ENCODE measurements at regions of chr7 and their contacts with region 1.

Region 1: DNA sequence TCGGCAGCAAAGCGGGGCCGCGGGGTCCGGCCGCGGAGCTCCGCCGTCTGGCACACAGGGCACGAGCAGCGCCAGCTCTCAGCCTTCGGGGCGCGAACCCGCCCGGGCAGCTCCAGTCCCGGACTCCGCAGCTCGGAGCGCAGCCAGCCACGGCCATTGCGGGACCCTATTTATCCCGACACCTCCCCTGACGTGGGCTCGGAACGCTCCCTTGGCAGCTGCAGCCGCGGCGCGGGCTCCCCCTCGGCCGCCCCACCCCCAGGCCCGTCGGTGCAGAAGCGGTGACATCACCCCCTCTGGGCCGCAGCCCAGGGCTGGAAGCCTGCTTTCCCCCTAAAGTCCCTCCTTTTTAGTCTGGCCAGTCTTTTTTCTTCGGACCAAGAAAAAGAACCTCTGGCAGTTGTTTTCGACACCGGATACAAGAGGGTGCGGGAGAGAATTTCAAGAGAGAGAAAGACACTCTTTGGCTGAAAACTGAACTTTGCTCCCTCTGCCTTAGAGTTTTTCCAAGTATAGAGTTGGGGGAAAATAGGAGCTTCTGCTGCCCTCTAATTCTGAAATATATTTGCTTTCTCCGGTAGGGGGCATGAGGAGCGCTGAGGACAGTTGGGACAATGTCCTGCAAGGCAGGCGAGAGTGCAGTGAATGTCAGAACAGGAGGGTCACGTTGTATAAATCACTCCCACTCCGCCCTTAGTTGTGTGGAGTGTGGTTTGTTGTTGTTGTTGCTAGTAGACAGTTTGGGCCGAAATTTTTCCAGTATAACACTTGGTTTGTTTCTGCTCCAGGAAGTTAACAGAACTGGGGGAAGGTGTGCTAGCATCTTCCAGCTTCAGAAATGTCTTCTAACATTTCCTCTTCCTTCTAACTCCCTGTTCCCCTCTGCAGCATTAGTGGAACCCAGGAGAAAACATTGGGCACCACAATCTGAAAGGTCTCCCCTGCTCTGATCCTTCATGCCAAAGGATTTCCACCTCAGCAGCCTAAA is at the start of gene SFRP4:
- DNase-seq: peak; percentile 80 to 84
- ATAC-seq: peak; percentile 31 to 61 (median 46)
- H3K4me3 ChIP-seq: peak within 1 kb of the TSS; percentile 64
- H3K27ac ChIP-seq: peak within 1 kb of the TSS; percentile 20
- H3K4me1 ChIP-seq: no peaks in the 10 kb centered on the region
- H3K27me3 ChIP-seq: peaks cover 0 to 5% (median 0%) of the 10 kb centered on the region in 3 donors
- CTCF ChIP-seq: peak; percentile 77
- total RNA-seq, gene SFRP4: 0.36 to 2.0 (median 1.1) TPM

Region 2: DNA sequence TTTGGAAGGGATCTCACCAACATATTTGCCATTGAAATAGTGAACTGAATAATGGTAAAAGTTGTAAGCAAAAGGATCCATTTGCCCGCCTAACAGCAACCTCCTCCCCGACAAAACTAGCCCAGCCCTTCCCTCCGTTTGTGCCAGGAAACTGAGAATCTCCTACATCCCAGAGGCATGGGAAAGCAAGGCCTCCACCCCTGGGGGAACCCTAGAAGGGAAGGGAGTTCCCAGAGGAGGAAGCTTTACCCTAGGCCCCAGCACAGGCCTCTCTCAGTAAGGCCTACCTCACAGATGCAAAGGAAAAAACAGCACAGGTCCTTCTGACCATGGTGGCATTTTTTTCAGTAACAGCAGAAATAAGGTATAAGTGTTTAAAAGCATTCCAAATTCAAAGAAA is 698.0 kb before region 1 on chr7:
- intact Hi-C with region 1: no loop called
- DNase-seq: no peak
- ATAC-seq: no peak
- H3K4me3 ChIP-seq: no peak overlapping the region
- H3K27ac ChIP-seq: no peak overlapping the region
- H3K4me1 ChIP-seq: no peaks in the 10 kb centered on the region
- H3K27me3 ChIP-seq: peaks cover 0 to 1% (median 0%) of the 10 kb centered on the region in 3 donors
- CTCF ChIP-seq: no peak

Region 3: DNA sequence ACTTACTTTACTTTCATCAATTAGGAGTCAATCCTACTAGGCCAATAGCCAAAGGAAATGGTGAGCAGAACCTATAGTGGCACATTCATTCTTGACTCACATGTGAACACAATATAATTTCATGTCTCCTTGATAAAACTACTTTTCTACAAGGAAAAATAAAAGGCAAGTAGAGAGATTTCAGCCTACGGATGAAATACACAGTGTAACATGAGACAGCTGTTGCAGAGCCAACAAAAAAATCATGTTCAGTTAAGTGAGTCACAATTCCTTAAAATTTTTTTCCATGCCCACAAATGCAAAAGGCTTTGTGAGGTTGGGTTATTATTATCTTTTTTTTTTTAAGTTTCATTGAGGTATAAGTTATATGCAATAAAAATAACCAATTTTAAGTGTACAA is 178.6 kb before region 1 on chr7:
- intact Hi-C with region 1: no loop called
- DNase-seq: no peak
- ATAC-seq: no peak
- H3K4me3 ChIP-seq: no peak overlapping the region
- H3K27ac ChIP-seq: no peak overlapping the region
- H3K4me1 ChIP-seq: no peaks in the 10 kb centered on the region
- H3K27me3 ChIP-seq: no peaks in the 10 kb centered on the region
- CTCF ChIP-seq: no peak

Region 4: DNA sequence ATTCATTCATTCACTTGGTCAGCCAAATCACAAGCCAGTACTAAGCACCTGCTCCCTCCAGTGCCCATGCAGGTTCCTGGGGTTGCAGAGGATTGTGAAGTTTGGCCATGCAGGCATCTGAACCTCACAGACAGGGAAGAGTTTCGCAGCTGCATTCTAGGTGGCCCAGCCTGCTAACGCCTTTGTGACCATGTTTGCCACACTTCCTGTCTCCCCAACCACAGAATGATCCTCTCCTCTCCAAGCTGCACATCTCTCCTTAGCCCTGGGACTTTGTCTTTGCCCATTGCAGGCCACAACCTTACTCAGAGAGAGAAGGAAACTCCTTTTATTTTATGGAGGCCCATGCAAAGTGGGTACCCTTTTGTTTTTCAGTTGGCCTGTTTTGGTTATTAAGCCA is 35.3 kb after region 1 on chr7:
- intact Hi-C with region 1: no loop called
- DNase-seq: no peak
- ATAC-seq: no peak
- H3K4me3 ChIP-seq: no peak overlapping the region
- H3K27ac ChIP-seq: no peak overlapping the region
- H3K4me1 ChIP-seq: peaks cover 3% of the 10 kb centered on the region
- H3K27me3 ChIP-seq: no peaks in the 10 kb centered on the region
- CTCF ChIP-seq: no peak

Region 5: GRCh38 chr7:38000272-38000671 is 83.3 kb after region 1 on chr7:
- intact Hi-C with region 1: loop called in 1 of 2 experiments (anchors 10 kb)
- DNase-seq: no peak
- ATAC-seq: peak; percentile 37 to 54 (median 46)
- H3K4me3 ChIP-seq: no peak overlapping the region
- H3K27ac ChIP-seq: peak overlapping the region; percentile 24
- H3K4me1 ChIP-seq: peaks cover 25% of the 10 kb centered on the region
- H3K27me3 ChIP-seq: no peaks in the 10 kb centered on the region
- CTCF ChIP-seq: no peak

Region 6: DNA sequence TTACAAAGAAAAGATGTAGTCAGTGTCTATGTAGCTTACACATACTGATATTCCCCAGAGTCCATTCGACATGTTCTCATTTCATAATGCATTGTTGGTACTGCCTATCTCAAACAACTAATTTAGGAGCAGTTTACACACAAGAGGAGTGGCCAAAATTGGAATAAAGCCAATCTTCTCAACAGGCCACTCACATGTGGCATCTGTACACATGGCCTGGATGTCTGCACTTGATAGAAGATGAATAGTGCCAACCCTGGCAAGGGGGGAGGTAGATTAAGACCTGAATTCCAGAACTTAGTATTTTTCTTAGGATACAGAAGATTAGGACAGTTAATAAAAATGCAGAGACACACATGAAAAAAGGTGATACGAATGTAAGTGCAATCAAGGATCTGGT is 135.8 kb after region 1 on chr7:
- intact Hi-C with region 1: loop called in 1 of 2 experiments (anchors 10 kb)
- DNase-seq: no peak
- ATAC-seq: no peak
- H3K4me3 ChIP-seq: no peak overlapping the region
- H3K27ac ChIP-seq: no peak overlapping the region
- H3K4me1 ChIP-seq: no peaks in the 10 kb centered on the region
- H3K27me3 ChIP-seq: no peaks in the 10 kb centered on the region
- CTCF ChIP-seq: no peak

Region 7: DNA sequence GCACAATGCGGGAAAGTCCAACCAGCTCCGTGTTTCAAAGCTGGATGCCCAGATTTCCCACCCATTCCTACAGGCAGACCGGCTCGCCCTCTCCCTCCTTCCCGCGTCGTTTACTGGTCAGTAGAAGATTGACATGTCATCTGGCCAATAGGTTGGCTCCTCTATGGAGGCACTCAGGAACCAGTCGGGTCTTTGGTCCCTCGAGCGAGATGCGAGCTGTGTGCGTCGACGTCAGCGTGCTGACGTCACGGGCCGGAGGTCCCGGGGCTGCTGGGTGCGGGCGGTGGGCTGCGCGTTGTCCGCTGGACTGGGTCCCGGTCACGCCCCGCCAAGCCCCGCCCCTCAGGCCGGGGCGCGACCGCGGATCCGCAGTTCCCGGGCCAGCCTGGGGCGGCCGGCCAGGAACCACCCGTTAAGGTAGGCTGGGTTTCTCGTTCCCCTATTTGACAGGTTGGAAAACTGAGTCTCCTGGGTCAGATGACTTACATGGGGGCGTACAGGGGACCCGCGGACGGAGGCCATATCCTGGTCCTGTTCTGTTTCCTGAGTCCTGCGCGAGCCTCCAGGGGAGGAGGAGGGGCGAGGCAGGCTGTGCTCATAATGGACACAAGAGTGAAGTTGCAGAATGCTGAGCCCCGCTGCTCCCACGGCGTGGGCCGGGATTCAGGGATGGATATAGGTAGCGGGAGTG is 261.2 kb after region 1 on chr7 and contains the start of gene STARD3NL:
- intact Hi-C with region 1: loop called (anchors 5 kb)
- DNase-seq: peak; percentile 93 to 96
- ATAC-seq: peak; percentile 98 to 99 (median 98)
- H3K4me3 ChIP-seq: peak within 1 kb of the TSS; percentile 90
- H3K27ac ChIP-seq: peak within 1 kb of the TSS; percentile 89
- H3K4me1 ChIP-seq: peaks cover 31% of the 10 kb centered on the region
- H3K27me3 ChIP-seq: no peaks in the 10 kb centered on the region
- CTCF ChIP-seq: no peak
- total RNA-seq, gene STARD3NL: 11.1 to 16.3 (median 14.4) TPM

Region 8: DNA sequence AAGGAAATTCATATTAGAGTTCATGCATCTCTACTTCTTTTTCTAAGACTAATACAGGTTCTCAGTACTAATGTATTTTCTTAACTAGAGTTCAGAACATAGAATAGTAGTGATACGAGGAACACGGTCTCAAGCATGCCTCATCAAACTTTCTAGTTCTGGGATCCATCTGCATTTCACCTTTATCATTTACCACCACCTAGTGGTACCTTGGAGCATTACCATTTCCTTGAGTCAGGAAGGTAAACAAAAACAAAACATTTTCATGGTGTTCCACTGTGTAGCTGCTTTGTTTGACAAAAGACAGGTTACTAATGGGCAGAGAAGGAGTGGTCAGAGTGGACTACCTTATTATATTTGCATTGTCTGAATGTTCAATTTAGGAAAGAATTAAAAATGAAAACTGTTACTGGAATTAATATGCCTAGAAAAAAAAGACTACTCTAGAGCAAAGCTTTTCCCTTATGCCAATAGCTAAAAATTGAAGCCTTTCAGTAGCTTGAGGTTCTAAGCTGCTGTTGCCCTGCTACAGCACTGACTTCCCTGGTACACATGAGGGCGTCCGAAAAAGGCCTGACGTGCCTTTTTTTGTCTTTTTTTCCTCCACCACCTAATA is 305.6 kb after region 1 on chr7:
- intact Hi-C with region 1: loop called in 1 of 2 experiments (anchors 5 kb)
- DNase-seq: no peak
- ATAC-seq: peak; percentile 75 to 95 (median 88)
- H3K4me3 ChIP-seq: no peak overlapping the region
- H3K27ac ChIP-seq: no peak overlapping the region
- H3K4me1 ChIP-seq: no peaks in the 10 kb centered on the region
- H3K27me3 ChIP-seq: no peaks in the 10 kb centered on the region
- CTCF ChIP-seq: peak; percentile 93

Region 9: GRCh38 chr7:38413784-38414183 is 496.8 kb after region 1 on chr7:
- intact Hi-C with region 1: no loop called
- DNase-seq: no peak
- ATAC-seq: no peak
- H3K4me3 ChIP-seq: no peak overlapping the region
- H3K27ac ChIP-seq: no peak overlapping the region
- H3K4me1 ChIP-seq: no peaks in the 10 kb centered on the region
- H3K27me3 ChIP-seq: no peaks in the 10 kb centered on the region
- CTCF ChIP-seq: no peak

Measured in psoas muscle (tissue), 8 donors.